ENCODE measurements at regions of chr1 and their contacts with region 1.

Region 1: DNA sequence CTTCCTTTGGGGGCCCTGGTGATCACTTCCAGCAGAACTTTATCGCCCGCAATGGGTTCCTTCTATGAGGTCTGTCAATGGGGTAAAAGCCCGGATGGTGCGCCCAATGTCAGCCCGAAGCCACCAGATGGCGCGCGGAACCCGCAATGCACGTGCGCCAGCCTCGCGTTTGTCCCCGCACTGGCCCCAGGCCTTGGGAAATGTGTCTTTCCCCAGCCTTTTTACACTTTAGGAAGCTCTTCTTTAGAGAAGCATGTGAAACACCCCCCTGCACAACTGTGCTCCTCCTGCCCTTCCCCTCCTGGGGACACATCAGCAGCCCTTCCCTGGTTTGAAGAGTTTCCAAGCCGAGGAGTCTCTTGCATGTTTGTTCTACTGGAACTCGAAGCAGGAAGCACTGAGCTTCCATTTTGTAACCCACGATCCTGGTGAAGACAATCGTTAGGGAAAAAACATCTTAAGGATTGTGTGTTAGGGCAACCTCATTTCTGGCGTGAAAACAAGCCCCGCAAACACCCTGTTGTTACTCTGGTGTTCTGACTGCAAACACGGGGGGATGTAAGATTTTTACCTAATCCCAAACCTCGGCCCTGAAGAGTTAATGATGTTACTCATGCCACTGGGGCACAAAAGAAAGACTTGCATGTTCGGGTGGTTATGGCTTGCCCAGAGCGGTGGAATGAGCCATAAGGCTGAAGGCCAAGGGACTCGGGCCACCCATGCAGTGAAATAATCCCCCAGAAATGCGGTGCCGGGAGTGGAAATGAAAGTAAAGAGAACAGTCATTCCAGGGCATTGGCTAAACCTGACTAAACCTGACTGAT is 20.4 kb upstream of the TARBP1 start:
- DNase-seq: no peak
- H3K4me3 ChIP-seq: peak overlapping the region; percentile 18; the same call in 1 of the 2 replicates
- CTCF ChIP-seq: peak; percentile 96

Region 2: GRCh38 chr1:234486498-234487448 is 12.6 kb before region 1 on chr1:
- CTCF ChIA-PET with region 1: interaction called, 24 read pairs
- POLR2A ChIA-PET with region 1: interaction called, 3 read pairs
- DNase-seq: no peak
- H3K4me3 ChIP-seq: no peak overlapping the region
- CTCF ChIP-seq: peak; percentile 71

Region 3: DNA sequence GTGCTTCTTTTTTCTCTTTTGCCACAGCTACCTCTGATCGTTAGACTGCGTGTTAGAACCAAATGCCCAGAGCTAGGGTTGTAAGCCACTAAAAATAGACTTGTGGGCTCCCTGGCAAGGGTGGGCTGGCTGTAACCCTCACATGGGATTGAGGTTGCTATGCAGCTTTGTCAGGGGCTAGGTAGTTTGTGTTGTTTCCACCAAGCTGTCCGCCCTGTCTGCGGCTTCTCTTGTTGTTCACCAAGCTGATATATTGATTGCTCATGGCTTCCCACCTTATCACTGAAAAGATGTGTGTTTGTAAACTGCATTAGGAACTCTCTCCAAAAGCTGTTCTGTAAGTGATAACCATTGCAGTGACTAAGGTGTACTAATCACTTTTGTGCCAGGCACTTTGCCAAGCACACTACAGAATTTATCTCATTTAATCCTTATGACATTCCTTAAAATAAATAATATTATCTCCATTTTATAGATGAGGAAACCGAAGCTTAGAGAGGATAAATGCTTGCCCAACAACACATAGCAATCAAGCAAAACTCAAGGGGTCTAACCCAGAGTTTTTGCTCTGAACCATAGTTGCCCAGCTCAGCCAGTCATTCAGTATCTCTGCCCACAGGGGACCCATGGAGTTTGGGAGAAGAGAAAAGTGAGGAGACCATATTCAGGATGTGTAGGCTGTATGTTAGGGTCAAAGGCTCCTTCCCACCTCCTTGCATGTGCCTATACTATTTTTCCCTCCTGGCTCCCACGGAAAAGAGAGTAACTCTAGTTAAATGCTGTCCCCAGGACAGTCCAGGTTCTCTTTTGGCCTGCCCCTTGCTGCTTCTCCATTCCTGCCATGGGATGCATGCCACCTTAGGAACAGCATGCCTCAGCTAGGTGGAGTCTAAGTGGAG is 21.8 kb after region 1 on chr1:
- CTCF ChIA-PET with region 1: interaction called, 10 read pairs
- POLR2A ChIA-PET with region 1: no interaction called
- DNase-seq: no peak
- H3K4me3 ChIP-seq: no peak overlapping the region
- CTCF ChIP-seq: no peak

Region 4: GRCh38 chr1:234599617-234600417 is 100.5 kb after region 1 on chr1:
- CTCF ChIA-PET with region 1: interaction called, 39 read pairs
- POLR2A ChIA-PET with region 1: interaction called, 10 read pairs
- DNase-seq: no peak
- H3K4me3 ChIP-seq: peak overlapping the region; percentile 61
- CTCF ChIP-seq: no peak

Region 5: GRCh38 chr1:234699795-234700665 is 200.7 kb after region 1 on chr1:
- CTCF ChIA-PET with region 1: no interaction called
- POLR2A ChIA-PET with region 1: no interaction called
- DNase-seq: no peak
- H3K4me3 ChIP-seq: no peak overlapping the region
- CTCF ChIP-seq: no peak

Region 6: GRCh38 chr1:235077571-235078479 is 578.5 kb after region 1 on chr1:
- CTCF ChIA-PET with region 1: interaction called, 55 read pairs
- POLR2A ChIA-PET with region 1: no interaction called
- DNase-seq: no peak
- H3K4me3 ChIP-seq: no peak overlapping the region
- CTCF ChIP-seq: no peak

Measured in AG04449 (cell line).